ENCODE measurements at regions of chr6 and their contacts with region 1.

Region 1: DNA sequence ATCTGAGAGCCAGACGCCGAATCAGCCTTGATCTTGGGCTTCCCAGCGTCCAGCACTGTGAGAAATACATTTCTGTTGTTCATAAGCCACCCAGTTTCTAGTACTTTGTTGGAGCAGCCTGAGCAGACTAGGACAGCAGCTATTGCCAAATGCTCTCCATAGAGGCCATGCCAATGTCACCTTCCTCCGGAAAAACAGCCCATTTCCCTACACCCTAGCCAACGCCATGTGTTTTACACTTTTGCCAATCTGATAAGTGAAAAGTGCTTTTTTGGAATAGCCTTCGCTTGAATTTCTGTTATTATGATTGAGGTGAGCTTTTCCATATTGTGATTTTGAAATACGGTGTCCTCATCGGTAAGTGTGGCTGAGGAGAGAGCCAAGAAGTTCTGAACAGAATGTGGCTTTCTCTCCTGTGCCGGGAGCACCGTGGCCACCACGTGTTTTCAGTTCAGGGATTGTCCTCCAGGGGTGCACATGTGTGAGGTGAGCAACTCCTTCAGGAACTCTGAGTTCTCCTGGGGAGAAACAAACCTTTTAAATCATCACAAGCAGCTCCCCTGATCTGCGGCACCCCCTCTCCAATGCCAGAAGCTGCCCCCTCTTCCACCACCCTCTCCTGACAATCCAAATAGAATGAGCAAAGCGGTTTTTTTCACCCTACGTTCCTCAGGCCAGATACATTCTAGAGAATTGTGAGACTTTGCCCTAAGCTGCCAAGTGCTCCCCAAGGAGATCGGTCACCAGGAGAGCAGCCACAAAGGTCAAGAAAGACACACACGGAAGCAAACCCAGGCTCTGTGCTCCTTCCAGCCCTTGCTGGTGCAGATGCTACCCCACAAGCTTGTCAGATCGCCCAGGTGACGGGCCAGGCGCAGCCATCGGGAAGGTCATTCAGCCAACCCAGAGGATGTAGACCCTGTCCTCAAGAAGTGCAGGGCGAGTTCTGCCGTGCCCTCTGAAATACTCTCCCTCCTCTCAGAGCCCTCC is 36.0 kb downstream of the TAF8 start:
- DNase-seq: no peak
- H3K4me3 Mint-ChIP-seq: no peak overlapping the region
- H3K27ac Mint-ChIP-seq: no peak overlapping the region
- H3K4me1 Mint-ChIP-seq: no peaks in the 10 kb centered on the region
- H3K27me3 Mint-ChIP-seq: no peaks in the 10 kb centered on the region

Region 2: GRCh38 chr6:42059743-42060142 is 26.6 kb before region 1 on chr6:
- CTCF ChIA-PET with region 1: no interaction called
- POLR2A ChIA-PET with region 1: interaction called, 10 read pairs
- intact Hi-C with region 1: no loop called
- DNase-seq: no peak
- H3K4me3 Mint-ChIP-seq: no peak overlapping the region
- H3K27ac Mint-ChIP-seq: no peak overlapping the region
- H3K4me1 Mint-ChIP-seq: peaks cover 6% of the 10 kb centered on the region
- H3K27me3 Mint-ChIP-seq: no peaks in the 10 kb centered on the region

Measured in activated CD4-positive, alpha-beta memory T cell treated with anti-CD3 and anti-CD28 coated beads for 36 hours (primary cell).